Activated naive CD4-positive, alpha-beta T cell treated with anti-CD3 and anti-CD28 coated beads for 36 hours (primary cell): ENCODE measurements at regions of chr21 and their contacts with region 1.

Region 1: GRCh38 chr21:28771790-28772501 is 220.7 kb downstream of the LTN1 start:
- DNase-seq: peak; percentile 23
- H3K4me3 Mint-ChIP-seq: no peak overlapping the region
- H3K27ac Mint-ChIP-seq: no peak overlapping the region
- H3K4me1 Mint-ChIP-seq: peaks cover 52% of the 10 kb centered on the region
- H3K27me3 Mint-ChIP-seq: no peaks in the 10 kb centered on the region

Region 2: DNA sequence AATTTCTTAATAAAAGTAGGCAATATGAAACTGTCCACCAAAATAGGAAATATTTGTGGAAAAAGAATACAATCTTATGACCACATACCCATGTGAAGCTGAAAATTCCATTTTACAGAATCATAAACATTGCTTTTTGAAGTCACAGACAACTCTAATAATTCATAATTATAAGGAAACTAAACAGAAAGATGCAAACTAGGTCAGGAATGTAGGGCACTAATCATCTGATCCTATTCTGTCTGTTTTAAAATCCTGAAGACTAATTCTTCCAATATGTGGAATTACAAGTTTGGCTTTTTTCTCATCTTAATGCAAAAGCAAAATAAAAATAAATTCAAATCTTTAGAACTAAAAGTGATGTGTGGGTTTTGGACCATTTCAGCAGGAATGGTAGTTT is 307.9 kb before region 1 on chr21:
- CTCF ChIA-PET with region 1: no interaction called
- intact Hi-C with region 1: no loop called
- DNase-seq: no peak
- H3K4me3 Mint-ChIP-seq: no peak overlapping the region
- H3K27ac Mint-ChIP-seq: no peak overlapping the region
- H3K4me1 Mint-ChIP-seq: no peaks in the 10 kb centered on the region
- H3K27me3 Mint-ChIP-seq: peaks cover 9% of the 10 kb centered on the region

Region 3: GRCh38 chr21:28615276-28615675 is 156.7 kb before region 1 on chr21:
- CTCF ChIA-PET with region 1: no interaction called
- intact Hi-C with region 1: no loop called
- DNase-seq: no peak
- H3K4me3 Mint-ChIP-seq: no peak overlapping the region
- H3K27ac Mint-ChIP-seq: no peak overlapping the region
- H3K4me1 Mint-ChIP-seq: no peaks in the 10 kb centered on the region
- H3K27me3 Mint-ChIP-seq: no peaks in the 10 kb centered on the region

Region 4: DNA sequence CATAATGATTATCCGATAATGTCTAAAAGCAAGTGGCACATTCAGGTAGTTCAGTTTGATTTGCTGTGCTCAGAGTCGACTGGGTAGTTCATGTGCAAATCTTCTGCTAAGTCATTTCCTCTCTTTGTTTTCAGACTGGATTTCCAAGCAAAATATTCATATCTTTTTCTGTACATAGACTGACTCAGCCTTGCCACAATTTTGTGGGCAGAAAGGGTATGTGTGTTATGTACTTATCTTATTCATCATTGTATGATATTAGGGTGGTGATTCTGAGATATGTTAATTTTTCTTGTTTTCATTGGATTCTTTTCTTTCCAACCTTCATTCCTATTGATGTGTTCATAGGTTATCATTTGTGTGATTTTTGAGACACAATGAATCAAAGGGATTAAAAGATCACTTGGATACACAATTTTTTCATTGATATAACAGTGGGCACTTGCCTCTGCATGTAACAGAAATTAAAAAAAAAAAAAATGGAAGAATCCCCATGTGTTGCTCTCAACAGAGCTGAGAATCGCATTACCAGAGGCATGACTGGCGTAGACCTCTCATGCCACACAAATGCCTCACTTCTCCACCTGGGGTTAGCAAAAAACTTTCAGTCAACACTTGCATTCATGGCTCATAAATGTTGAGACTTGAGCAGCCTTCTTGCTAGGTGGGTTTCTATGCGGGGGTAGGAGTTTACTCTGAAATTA is 134.8 kb before region 1 on chr21:
- CTCF ChIA-PET with region 1: no interaction called
- intact Hi-C with region 1: loop called (anchors 2 kb)
- DNase-seq: peak; percentile 59
- H3K4me3 Mint-ChIP-seq: no peak overlapping the region
- H3K27ac Mint-ChIP-seq: no peak overlapping the region
- H3K4me1 Mint-ChIP-seq: peaks cover 22% of the 10 kb centered on the region
- H3K27me3 Mint-ChIP-seq: no peaks in the 10 kb centered on the region

Region 5: DNA sequence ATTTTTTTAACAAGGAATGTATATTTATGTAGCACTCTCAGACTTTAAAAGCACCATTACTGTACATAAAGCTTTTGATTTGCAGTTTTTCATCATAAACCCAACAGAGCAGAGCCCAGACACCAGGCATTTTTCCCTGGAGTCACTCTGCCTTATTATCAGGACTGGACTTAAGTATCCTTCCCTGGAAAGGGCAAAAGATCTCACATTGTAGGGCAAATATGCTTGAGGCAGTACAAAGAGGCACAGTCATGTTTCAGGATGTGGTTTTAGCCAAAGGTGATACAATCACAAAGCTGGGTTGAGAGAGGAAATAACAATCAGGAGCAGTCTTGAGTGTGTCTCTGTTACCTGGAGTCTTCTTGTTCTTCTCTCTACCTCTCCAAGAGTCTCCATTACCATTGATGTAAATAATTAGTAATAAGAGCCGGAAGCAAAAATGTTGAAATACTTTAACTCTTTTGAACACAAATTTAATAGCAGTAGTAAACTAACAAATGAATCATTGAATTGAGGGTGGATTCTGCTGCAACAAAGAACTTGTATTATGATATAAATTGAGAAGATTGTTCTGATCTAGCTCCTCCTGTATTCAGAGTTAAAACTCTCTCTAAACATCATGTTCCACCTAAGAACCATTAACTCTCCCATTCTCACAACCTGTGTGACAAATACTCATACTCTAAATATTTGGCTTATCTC is 60.2 kb after region 1 on chr21:
- CTCF ChIA-PET with region 1: no interaction called
- intact Hi-C with region 1: loop called (anchors 1 kb)
- DNase-seq: peak; percentile 36
- H3K4me3 Mint-ChIP-seq: no peak overlapping the region
- H3K27ac Mint-ChIP-seq: no peak overlapping the region
- H3K4me1 Mint-ChIP-seq: peaks cover 57% of the 10 kb centered on the region
- H3K27me3 Mint-ChIP-seq: no peaks in the 10 kb centered on the region

Region 6: GRCh38 chr21:29953072-29953471 is 1181.1 kb after region 1 on chr21:
- CTCF ChIA-PET with region 1: no interaction called
- intact Hi-C with region 1: no loop called
- DNase-seq: no peak
- H3K4me3 Mint-ChIP-seq: no peak overlapping the region
- H3K27ac Mint-ChIP-seq: no peak overlapping the region
- H3K4me1 Mint-ChIP-seq: no peaks in the 10 kb centered on the region
- H3K27me3 Mint-ChIP-seq: peaks cover 9% of the 10 kb centered on the region